Naive thymus-derived CD4-positive, alpha-beta T cell (primary cell): ENCODE measurements at regions of chr15 and their contacts with region 1.

Region 1: DNA sequence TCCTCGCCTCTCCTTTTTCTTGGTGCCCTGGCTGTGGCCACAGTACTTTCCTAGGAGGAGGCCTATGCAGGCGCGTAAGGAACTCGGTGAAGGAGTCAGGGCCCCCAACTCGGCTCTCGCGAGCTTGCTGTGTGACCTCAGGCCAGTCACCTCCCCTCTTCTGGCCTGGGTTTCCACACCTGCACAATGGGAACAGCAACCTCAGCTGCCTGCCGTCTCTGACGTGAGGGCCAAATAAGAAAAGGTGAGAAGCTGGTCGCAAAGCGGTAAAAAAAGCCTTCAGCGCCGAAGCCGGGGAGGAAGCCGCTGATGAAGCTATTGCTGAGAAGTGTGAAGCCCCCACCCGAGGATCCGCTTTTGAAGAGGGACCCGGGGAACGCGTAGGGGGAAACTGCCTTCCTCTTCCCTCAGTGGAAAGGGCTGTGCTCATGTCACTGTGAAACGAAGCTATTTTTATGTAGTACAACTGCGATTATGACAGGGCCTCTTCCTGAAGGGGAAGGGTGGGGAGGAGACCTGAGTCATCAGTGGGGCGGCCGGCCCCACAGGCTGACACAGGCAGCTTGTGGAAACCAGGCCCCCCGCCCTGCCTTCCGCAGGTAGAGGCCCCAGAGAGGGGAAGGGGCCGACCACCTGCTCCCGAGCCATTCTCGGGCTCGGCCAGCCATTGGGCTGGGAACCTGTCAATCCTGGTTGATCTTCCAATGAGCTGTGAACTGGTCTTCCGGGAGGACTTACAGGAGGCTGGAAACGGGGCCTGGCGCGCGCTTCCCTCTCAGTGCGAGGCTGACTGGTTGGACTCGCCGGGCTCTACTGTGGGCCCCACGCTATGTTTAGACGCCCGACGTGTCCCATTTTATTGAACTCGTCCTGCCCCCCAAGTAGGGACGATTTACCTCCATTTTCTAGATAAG is 18.0 kb upstream of the ANKDD1A start:
- DNase-seq: peak; percentile 78 to 97 (median 94)
- ATAC-seq: peak; percentile 82
- H3K4me3 ChIP-seq: peak overlapping the region; percentile 74
- H3K4me3 Mint-ChIP-seq: peak overlapping the region; percentile 77 to 94 (median 90)
- H3K27ac ChIP-seq: peak overlapping the region; percentile 84
- H3K27ac Mint-ChIP-seq: peak overlapping the region; percentile 90 to 100 (median 98)
- H3K4me1 ChIP-seq: peaks cover 52 to 53% of the 10 kb centered on the region in 2 donors
- H3K4me1 Mint-ChIP-seq: peaks cover 41 to 76% (median 63%) of the 10 kb centered on the region in 7 donors
- H3K27me3 ChIP-seq: no peaks in the 10 kb centered on the region
- H3K27me3 Mint-ChIP-seq: no peaks in the 10 kb centered on the region

Region 2: DNA sequence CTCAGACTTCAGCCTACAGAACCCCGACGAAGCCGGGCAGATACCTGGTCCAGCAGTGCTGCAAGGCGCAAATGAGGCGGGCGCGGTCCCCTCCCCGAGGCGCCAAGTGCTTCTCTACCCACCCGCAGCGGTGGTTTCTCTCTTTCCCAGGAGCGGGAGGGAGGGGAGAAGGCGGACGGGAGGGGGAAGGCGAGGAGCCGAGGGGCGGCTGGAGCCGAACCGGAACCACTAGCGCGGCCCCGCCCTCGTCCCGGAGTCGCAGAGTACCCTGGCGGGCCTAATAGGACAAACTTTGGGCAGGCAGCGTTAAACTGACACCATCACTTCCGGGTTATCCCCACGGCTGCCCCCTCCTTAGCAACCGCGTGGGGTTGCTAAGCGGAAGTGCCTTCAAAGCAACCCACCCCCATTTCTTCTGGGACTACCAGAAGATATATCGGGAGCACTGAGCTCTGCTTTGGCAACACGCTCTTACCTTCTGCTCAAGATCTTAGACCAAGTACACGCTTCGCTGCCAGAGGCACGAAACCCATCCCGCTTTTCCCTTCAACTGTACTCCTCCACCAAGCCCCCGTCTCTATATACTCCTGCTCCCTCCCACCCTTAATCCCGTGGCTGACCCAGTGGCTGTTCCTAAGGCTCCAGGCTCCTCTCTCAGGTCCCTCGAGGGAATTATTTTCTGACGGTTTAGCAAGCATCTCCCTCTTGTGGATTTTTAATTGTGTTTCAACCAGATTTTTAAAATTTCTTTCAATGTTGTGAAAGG is 537.6 kb before region 1 on chr15 and contains the start of gene CSNK1G1:
- CTCF ChIA-PET with region 1: no interaction called
- POLR2A ChIA-PET with region 1: no interaction called
- intact Hi-C with region 1: loop called in 1 of 2 experiments (anchors 1 kb)
- DNase-seq: peak; percentile 73 to 94 (median 89)
- ATAC-seq: peak; percentile 100
- H3K4me3 ChIP-seq: peak within 1 kb of the TSS; percentile 90
- H3K4me3 Mint-ChIP-seq: peak within 1 kb of the TSS; percentile 90 to 97 (median 92)
- H3K27ac ChIP-seq: peak within 1 kb of the TSS; percentile 73
- H3K27ac Mint-ChIP-seq: peak within 1 kb of the TSS; percentile 78 to 93 (median 92)
- H3K4me1 ChIP-seq: peaks cover 9 to 10% of the 10 kb centered on the region in 2 donors
- H3K4me1 Mint-ChIP-seq: peaks cover 14 to 22% (median 18%) of the 10 kb centered on the region in 7 donors
- H3K27me3 ChIP-seq: no peaks in the 10 kb centered on the region
- H3K27me3 Mint-ChIP-seq: no peaks in the 10 kb centered on the region
- total RNA-seq, gene CSNK1G1: 19.7 to 31.4 (median 26.5) TPM

Region 3: DNA sequence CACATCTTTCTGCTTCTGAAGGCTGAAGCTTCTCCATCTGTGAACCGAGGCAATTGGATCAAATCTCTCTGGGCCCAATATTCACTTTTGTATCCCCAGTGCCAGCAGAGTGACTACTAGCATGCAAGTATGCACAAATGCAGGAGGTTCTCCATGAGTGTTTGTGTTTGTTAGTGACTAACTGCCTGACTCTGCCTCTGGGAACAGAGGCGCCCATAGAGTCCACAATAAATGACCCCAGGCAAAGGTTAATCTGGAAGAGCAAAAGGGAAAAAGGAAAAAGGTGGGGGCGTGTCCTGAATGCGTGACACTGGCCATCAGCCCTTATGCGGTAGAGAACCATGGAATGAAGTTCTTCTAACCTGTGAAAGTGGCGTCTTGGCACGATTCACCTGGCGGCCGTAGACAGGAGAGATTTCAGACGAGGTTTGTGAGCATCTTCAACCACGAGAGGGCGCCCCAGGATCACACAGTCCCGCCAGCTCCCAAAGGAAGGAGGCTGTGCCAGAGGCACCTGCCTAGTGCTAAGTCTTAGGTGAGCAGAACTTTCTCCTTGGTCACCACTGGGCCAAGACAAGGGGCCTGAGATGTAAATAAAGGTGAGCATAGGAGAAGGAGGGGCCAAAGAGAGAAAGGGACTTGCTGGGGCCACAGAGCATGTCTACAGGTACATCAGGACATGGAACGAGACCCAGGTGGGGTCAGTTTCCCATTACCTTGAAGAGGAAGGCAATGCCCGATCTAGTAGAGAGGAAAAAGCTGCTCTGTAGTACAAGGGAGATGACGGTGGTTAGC is 162.5 kb before region 1 on chr15:
- CTCF ChIA-PET with region 1: interaction called, 6 read pairs
- POLR2A ChIA-PET with region 1: interaction called, 9 read pairs
- intact Hi-C with region 1: loop called in 1 of 2 experiments (anchors 1 kb)
- DNase-seq: peak; percentile 65 to 86 (median 77)
- ATAC-seq: peak; percentile 87
- H3K4me3 ChIP-seq: no peak overlapping the region
- H3K4me3 Mint-ChIP-seq: peak overlapping the region in 2 of 10 donors; percentile 4 to 46
- H3K27ac ChIP-seq: no peak overlapping the region
- H3K27ac Mint-ChIP-seq: peak overlapping the region in 1 of 9 donors; percentile 57
- H3K4me1 ChIP-seq: no peaks in the 10 kb centered on the region
- H3K4me1 Mint-ChIP-seq: peaks cover 8 to 12% (median 10%) of the 10 kb centered on the region in 7 donors
- H3K27me3 ChIP-seq: no peaks in the 10 kb centered on the region
- H3K27me3 Mint-ChIP-seq: peaks cover 0 to 5% (median 4%) of the 10 kb centered on the region in 5 donors

Region 4: DNA sequence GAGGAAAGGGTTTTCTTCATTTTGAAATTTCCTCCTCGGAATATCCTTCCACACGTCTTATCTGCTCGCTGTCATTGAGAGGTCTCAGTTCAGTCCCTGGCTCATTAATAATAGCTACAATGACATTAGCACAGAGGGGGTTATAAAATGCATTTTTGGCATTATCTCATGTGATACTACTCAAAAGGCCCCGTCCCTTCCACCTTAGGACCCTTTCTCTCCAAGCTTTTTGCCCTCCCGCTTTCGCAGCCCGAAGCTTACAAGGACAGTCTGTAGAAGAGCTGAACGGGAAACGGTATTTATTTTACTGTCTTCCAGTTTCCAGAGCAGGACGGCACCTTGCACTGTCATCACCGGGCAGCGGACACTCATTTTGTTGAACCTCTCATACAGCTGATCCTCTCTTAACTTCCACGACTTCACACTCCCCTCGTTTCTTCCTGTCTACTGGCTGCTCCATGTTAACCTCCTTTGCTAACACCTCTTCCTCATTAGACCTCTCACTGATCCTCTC is 57.7 kb before region 1 on chr15:
- CTCF ChIA-PET with region 1: interaction called, 23 read pairs
- POLR2A ChIA-PET with region 1: interaction called, 115 read pairs
- intact Hi-C with region 1: loop called (anchors 1 kb)
- DNase-seq: no peak
- ATAC-seq: no peak
- H3K4me3 ChIP-seq: no peak overlapping the region
- H3K4me3 Mint-ChIP-seq: peak overlapping the region; percentile 16 to 80 (median 72)
- H3K27ac ChIP-seq: peak overlapping the region; percentile 38
- H3K27ac Mint-ChIP-seq: peak overlapping the region; percentile 44 to 91 (median 81)
- H3K4me1 ChIP-seq: peaks cover 37 to 43% of the 10 kb centered on the region in 2 donors
- H3K4me1 Mint-ChIP-seq: peaks cover 42 to 56% (median 52%) of the 10 kb centered on the region in 7 donors
- H3K27me3 ChIP-seq: no peaks in the 10 kb centered on the region
- H3K27me3 Mint-ChIP-seq: no peaks in the 10 kb centered on the region

Region 5: GRCh38 chr15:64865998-64866520 is 27.7 kb before region 1 on chr15:
- CTCF ChIA-PET with region 1: no interaction called
- POLR2A ChIA-PET with region 1: interaction called, 8 read pairs
- intact Hi-C with region 1: loop called in 1 of 2 experiments (anchors 2 kb)
- DNase-seq: no peak
- ATAC-seq: no peak
- H3K4me3 ChIP-seq: no peak overlapping the region
- H3K4me3 Mint-ChIP-seq: no peak overlapping the region
- H3K27ac ChIP-seq: no peak overlapping the region
- H3K27ac Mint-ChIP-seq: no peak overlapping the region
- H3K4me1 ChIP-seq: no peaks in the 10 kb centered on the region
- H3K4me1 Mint-ChIP-seq: peaks cover 0 to 19% (median 9%) of the 10 kb centered on the region in 7 donors
- H3K27me3 ChIP-seq: no peaks in the 10 kb centered on the region
- H3K27me3 Mint-ChIP-seq: no peaks in the 10 kb centered on the region

Region 6: DNA sequence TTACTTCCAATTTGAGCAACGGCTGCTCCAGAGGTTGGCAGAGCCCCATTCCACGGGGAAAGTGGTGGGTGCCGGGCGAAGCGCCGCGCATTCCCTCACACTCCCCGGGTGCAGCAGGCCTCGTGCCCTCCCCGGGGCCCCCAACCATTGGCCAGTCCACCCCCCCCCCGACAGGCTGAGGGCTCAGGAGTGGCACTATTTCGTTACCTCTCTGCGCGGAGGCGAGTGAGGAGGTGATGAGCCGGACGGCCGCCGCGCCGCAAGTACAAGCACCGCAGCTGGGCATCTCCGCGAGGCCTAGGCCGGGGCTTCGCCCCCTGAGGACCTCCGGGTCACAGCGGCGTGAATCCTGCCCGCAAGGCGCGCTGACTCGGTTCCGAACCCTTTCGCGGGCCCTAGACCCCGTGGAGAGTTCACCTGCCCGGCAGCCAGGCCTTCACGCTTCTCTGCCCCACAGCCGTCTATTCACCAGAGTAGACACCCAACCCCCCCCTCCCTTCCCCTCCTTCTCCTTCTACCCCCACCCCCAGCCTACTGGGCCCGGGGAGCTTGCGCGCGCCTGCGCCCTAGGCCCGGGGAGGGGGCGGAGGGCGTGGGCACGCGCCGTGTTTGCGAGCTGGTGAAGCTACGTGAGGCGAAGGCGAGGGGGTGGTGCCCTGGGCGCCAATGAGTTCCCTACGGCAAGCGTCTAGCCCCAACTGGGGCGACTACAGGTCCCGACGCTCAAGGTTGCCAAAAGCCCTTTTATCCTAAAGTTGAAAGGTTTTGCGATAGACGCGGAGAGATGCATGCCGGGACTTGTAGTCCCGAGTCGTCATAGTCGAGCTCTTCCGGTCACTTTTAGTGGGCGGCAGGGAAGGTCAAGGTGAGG is 291.4 kb after region 1 on chr15 and contains the start of gene CLPX:
- CTCF ChIA-PET with region 1: no interaction called
- POLR2A ChIA-PET with region 1: interaction called, 3 read pairs
- intact Hi-C with region 1: loop called in 1 of 2 experiments (anchors 1 kb)
- DNase-seq: peak; percentile 80 to 97 (median 95)
- ATAC-seq: peak; percentile 97
- H3K4me3 ChIP-seq: peak within 1 kb of the TSS; percentile 85
- H3K4me3 Mint-ChIP-seq: peak within 1 kb of the TSS; percentile 89 to 96 (median 94)
- H3K27ac ChIP-seq: peak within 1 kb of the TSS; percentile 93
- H3K27ac Mint-ChIP-seq: peak within 1 kb of the TSS; percentile 87 to 98 (median 96)
- H3K4me1 ChIP-seq: peaks cover 4% of the 10 kb centered on the region in 2 donors
- H3K4me1 Mint-ChIP-seq: peaks cover 14 to 40% (median 31%) of the 10 kb centered on the region in 7 donors
- H3K27me3 ChIP-seq: no peaks in the 10 kb centered on the region
- H3K27me3 Mint-ChIP-seq: no peaks in the 10 kb centered on the region
- total RNA-seq, gene CLPX: 33.4 to 56.3 (median 51.1) TPM

Region 7: GRCh38 chr15:65792130-65792987 is 898.6 kb after region 1 on chr15 and contains the start of gene DENND4A:
- CTCF ChIA-PET with region 1: no interaction called
- POLR2A ChIA-PET with region 1: no interaction called
- intact Hi-C with region 1: loop called in 1 of 2 experiments (anchors 10 kb)
- DNase-seq: peak; percentile 95 to 99 (median 98)
- ATAC-seq: peak; percentile 91
- H3K4me3 ChIP-seq: peak within 1 kb of the TSS; percentile 91
- H3K4me3 Mint-ChIP-seq: peak within 1 kb of the TSS; percentile 89 to 99 (median 93)
- H3K27ac ChIP-seq: peak within 1 kb of the TSS; percentile 99
- H3K27ac Mint-ChIP-seq: peak within 1 kb of the TSS; percentile 94 to 100 (median 98)
- H3K4me1 ChIP-seq: peaks cover 24 to 33% of the 10 kb centered on the region in 2 donors
- H3K4me1 Mint-ChIP-seq: peaks cover 18 to 66% (median 49%) of the 10 kb centered on the region in 7 donors
- H3K27me3 ChIP-seq: no peaks in the 10 kb centered on the region
- H3K27me3 Mint-ChIP-seq: no peaks in the 10 kb centered on the region
- total RNA-seq, gene DENND4A: 40.0 to 67.9 (median 64.6) TPM